Lower leg skin (tissue), 4 donors: ENCODE measurements at regions of chr4 and their contacts with region 1.

Region 1: GRCh38 chr4:111631215-111631999 is 513.8 kb upstream of the FAM241A start:
- DNase-seq: peak in 1 of 2 donors; percentile 48
- H3K4me3 ChIP-seq: no peak overlapping the region
- CTCF ChIP-seq: no peak
- POLR2A ChIP-seq: no peak

Region 2: GRCh38 chr4:111707491-111707890 is 76.1 kb after region 1 on chr4:
- intact Hi-C with region 1: no loop called
- DNase-seq: no peak
- H3K4me3 ChIP-seq: no peak overlapping the region
- CTCF ChIP-seq: no peak
- POLR2A ChIP-seq: no peak

Region 3: GRCh38 chr4:111854494-111855087 is 223.2 kb after region 1 on chr4:
- intact Hi-C with region 1: loop called (anchors 10 kb)
- DNase-seq: no peak
- H3K4me3 ChIP-seq: no peak overlapping the region
- CTCF ChIP-seq: no peak
- POLR2A ChIP-seq: no peak